ENCODE measurements at regions of chr13 and their contacts with region 1.

Region 1: DNA sequence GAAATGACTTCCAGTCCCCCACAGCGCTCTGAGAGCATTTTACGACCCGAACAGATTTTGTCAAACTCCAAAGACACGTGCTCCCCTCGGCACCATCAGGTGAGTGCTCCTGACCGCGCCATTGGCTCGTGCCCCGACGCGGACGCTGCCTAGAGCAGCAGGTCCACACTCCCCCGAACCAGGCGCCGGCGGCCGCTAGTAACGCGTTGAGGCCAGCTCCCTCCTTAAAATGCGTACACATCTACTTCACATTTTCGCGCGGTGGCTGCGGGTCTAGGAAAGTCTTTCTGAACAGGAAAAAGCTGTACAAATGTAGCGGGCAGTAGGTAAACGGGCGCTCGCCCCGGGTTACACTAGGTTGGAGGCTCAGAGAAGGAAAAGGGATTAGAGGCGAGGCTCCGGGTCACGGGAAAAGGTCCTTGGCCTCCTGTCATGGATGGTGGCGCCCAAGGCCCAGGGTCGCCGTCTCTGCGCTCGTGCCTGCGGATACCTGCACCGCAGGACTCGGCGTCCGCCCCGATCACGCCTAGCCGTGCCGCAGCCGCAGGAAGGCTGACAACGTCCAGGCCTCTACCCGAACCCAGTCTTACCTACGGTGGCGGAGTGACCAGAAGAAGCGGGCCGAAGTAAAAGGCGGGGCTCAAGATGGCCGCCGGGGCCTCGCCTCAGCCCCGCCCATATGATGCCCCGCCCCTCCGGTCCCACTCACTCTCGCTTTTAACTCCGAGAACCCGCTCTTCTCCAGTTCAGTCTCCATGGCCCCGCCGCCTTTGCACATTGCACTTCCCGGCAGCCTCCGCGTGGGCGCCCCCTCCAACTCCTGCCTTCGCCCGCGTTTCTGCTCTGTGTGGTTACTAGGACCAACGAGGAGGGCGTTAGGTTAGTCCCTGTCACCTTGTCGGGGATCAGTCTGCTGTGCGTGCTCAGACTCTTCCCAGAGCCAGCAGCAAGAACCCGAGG is at the start of gene ESD:
- DNase-seq: peak; percentile 97
- H3K4me3 ChIP-seq: peak within 1 kb of the TSS; percentile 91
- H3K4me3 Mint-ChIP-seq: peak within 1 kb of the TSS; percentile 85
- H3K27ac Mint-ChIP-seq: peak within 1 kb of the TSS; percentile 94
- H3K4me1 ChIP-seq: peaks cover 12% of the 10 kb centered on the region
- H3K4me1 Mint-ChIP-seq: peaks cover 8% of the 10 kb centered on the region
- H3K27me3 ChIP-seq: no peaks in the 10 kb centered on the region
- H3K27me3 Mint-ChIP-seq: no peaks in the 10 kb centered on the region
- CTCF ChIP-seq: no peak
- total RNA-seq, gene ESD: 118 and 119 TPM in 2 replicates

Region 2: GRCh38 chr13:46721054-46721453 is 75.7 kb before region 1 on chr13:
- CTCF ChIA-PET with region 1: no interaction called
- POLR2A ChIA-PET with region 1: no interaction called
- intact Hi-C with region 1: no loop called
- DNase-seq: peak in 1 of 2 experiments; percentile 53
- H3K4me3 ChIP-seq: no peak overlapping the region
- H3K4me3 Mint-ChIP-seq: no peak overlapping the region
- H3K27ac Mint-ChIP-seq: no peak overlapping the region
- H3K4me1 ChIP-seq: peaks cover 29% of the 10 kb centered on the region
- H3K4me1 Mint-ChIP-seq: peaks cover 14% of the 10 kb centered on the region
- H3K27me3 ChIP-seq: no peaks in the 10 kb centered on the region
- H3K27me3 Mint-ChIP-seq: no peaks in the 10 kb centered on the region
- CTCF ChIP-seq: peak; percentile 61 to 74

Region 3: DNA sequence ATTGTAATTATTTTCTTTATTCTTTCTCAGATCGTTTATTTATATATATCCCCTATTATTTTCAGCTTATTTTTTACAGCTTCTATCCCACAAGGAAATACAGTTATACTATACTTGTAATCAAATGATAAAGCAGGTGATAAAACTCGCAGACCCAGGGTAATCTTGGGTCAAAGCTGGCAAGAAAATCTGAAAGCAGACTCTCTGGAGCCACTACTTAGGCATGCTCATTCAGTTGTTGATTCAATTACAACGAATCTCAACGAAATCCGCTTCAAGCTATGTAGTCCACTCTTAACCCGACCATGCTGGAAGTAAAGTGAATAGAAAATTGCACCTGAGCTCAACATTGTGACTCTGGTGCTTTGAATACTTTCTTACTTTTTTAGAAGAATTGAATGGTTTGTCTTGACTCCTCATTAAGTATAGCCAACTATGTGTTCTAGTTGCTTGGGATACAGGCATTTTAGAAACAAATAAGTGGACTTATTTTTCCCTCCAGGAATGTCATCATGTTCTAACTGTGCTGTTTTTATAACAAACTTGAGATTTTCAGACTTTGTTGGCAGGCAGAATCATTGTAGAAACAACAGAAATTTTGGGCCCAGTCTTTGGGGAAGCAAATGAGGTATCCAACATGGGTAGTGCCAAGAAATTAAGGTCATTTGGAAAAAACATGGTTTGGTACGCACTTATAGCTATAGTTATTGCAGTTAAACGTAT is 21.2 kb before region 1 on chr13:
- CTCF ChIA-PET with region 1: no interaction called
- POLR2A ChIA-PET with region 1: no interaction called
- intact Hi-C with region 1: loop called (anchors 2 kb)
- DNase-seq: no peak
- H3K4me3 ChIP-seq: no peak overlapping the region
- H3K4me3 Mint-ChIP-seq: no peak overlapping the region
- H3K27ac Mint-ChIP-seq: no peak overlapping the region
- H3K4me1 ChIP-seq: no peaks in the 10 kb centered on the region
- H3K4me1 Mint-ChIP-seq: no peaks in the 10 kb centered on the region
- H3K27me3 ChIP-seq: no peaks in the 10 kb centered on the region
- H3K27me3 Mint-ChIP-seq: no peaks in the 10 kb centered on the region
- CTCF ChIP-seq: no peak

Region 4: GRCh38 chr13:46866150-46866549 is 69.4 kb after region 1 on chr13:
- CTCF ChIA-PET with region 1: no interaction called
- POLR2A ChIA-PET with region 1: no interaction called
- intact Hi-C with region 1: loop called (anchors 1 kb)
- DNase-seq: peak; percentile 83 to 91
- H3K4me3 ChIP-seq: no peak overlapping the region
- H3K4me3 Mint-ChIP-seq: no peak overlapping the region
- H3K27ac Mint-ChIP-seq: no peak overlapping the region
- H3K4me1 ChIP-seq: peaks cover 16% of the 10 kb centered on the region
- H3K4me1 Mint-ChIP-seq: peaks cover 15% of the 10 kb centered on the region
- H3K27me3 ChIP-seq: no peaks in the 10 kb centered on the region
- H3K27me3 Mint-ChIP-seq: peaks cover 8% of the 10 kb centered on the region
- CTCF ChIP-seq: no peak